Activated CD4-positive, alpha-beta memory T cell treated with anti-CD3 and anti-CD28 coated beads, Interleukin-2, amount 10 ng/mL, durations not matched to agents 7 days and 5 days (primary cell): ENCODE measurements at regions of chr12 and their contacts with region 1.

Region 1: DNA sequence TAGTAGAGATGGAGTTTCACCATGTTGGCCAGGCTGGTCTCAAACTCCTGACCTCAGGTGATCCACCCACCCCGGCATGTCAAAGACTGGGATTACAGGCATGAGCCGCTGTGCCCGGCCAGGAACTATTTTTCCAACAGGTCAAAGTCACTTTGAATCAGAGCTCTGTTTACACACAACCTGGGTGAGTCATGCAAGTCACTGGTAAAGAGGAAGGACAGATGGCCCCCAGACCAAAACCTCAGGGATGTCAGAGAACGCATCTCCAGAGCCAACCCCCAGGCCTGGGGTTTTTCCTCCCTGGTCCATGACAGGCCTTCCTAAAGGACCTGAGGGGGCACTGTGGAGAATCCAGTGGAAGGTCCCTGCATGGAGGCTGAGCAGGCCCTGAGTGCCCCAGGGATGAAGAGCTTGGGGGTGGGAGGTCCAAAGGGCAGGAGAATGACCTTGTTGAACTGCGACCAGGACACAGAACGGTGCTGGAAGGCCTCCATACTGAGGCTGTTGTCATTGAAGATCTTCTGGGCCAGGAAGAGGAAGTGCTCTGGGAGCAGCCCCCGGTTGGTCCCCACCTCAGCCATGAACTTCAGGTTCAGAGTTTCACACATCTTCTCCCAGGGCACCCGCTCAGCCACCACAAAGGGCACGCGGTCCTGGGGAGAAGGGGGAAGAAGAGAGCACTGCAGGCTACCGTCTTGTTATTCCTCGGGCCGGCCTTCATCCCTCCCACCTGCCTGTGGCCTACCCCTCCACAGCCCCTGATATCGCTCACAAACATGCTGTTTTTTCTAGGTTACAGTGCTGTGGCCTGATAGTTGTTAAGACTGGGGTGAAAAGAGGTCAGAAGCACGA is 9.1 kb downstream of the STAT6 start:
- DNase-seq: no peak
- H3K4me3 Mint-ChIP-seq: no peak overlapping the region
- H3K27ac Mint-ChIP-seq: peak overlapping the region; percentile 26
- H3K4me1 Mint-ChIP-seq: peaks cover 20% of the 10 kb centered on the region
- H3K27me3 Mint-ChIP-seq: no peaks in the 10 kb centered on the region

Region 2: DNA sequence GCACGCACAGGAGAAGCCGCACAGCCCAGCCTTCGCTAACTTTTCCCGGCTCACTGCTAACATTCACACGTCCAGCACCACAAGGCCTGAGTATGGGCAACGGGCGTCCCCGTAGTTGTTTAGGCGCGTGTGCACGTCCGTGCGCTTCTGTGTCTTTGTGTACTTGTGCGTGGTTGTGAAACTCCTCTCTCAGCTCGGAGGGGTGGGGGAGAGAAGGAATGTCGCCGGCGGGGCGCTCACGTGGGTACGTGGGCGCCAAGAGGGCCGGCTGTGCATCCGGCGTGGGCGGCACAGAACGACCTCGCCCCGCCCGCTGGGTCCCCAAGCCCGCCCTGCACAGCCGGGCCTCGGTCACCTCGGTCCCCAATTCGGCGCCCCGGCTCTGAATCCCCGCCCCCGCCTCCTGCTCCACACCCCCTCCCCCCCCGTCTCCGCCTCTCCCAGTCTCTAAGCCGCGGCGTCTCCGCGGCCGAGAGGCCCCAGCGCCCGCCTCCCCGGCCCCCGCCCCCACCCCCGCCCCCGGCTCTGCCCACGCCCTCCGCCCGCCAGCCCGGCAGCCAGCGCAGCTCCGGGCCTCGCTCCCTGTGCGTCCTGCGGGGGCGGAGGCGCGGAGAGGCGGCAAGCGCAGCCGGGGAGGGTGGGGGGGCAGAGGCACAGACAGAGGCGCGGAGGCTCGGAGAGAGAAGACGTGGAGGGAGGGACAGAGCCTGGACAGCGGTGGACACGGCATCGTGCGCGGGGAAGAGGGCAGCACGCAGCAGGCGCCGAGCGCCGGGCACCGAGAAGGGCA is 13.4 kb before region 1 on chr12 and contains the start of gene NAB2:
- CTCF ChIA-PET with region 1: interaction called, 3 read pairs
- POLR2A ChIA-PET with region 1: interaction called, 247 read pairs
- DNase-seq: peak; percentile 96
- H3K4me3 Mint-ChIP-seq: peak within 1 kb of the TSS; percentile 89
- H3K27ac Mint-ChIP-seq: peak within 1 kb of the TSS; percentile 90
- H3K4me1 Mint-ChIP-seq: peaks cover 64% of the 10 kb centered on the region
- H3K27me3 Mint-ChIP-seq: no peaks in the 10 kb centered on the region
- total RNA-seq, gene NAB2: 8.7 to 9.6 TPM

Region 3: DNA sequence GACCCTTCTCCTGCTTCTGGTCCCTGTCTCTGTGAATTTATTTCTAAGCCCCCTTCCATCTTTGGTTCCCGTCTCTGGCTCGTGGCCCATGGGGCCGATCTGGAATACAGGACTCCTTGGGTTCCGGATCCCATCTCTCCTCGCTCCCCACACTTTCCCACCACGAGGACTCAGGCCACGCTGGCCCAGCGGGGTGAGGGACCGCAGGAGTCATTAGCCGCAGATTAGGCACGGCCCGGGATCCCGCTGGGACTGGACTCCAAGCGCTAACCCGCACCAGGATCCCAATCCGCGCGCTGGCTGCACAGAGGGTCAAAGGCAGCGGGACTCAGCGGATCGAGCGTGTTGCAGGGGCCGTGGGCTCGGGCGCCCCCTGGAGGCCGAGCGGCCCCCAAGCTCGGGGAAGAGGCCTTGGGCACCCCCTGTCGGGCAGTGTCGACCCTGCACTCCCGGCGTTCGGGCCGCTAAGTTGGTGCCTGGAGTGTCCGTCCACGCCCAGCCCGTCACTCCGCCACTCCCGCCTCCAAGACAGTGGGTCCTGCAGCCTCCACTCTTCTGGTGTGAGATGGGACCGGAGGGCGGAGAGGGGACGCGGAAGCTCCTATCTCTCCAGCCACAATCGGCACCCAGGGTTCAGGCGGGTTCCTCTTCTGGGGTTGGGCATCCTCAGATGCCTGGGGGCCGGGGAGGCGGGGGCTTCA is 136.9 kb after region 1 on chr12:
- CTCF ChIA-PET with region 1: no interaction called
- POLR2A ChIA-PET with region 1: no interaction called
- DNase-seq: peak; percentile 92
- H3K4me3 Mint-ChIP-seq: peak overlapping the region; percentile 95
- H3K27ac Mint-ChIP-seq: peak overlapping the region; percentile 83
- H3K4me1 Mint-ChIP-seq: peaks cover 79% of the 10 kb centered on the region
- H3K27me3 Mint-ChIP-seq: peaks cover 48% of the 10 kb centered on the region